Activated T-helper 1 cell treated with anti-CD3 and anti-CD28 coated beads, Interleukin-12 subunit alpha, Interleukin-12 subunit beta, Interleukin-2, Interleukin-4 antibody, amounts not matched to agents 30 ng/mL and 10 ng/mL and 1 ng/mL, durations not matched to agents 14 hours and 24 hours and 36 hours (primary cell): ENCODE measurements at regions of chr3 and their contacts with region 1.

Region 1: GRCh38 chr3:124995460-124995994 is 60.3 kb downstream of the HEG1 start:
- DNase-seq: peak; percentile 33
- H3K4me3 Mint-ChIP-seq: no peak overlapping the region
- H3K27ac Mint-ChIP-seq: no peak overlapping the region
- H3K4me1 Mint-ChIP-seq: peaks cover 20% of the 10 kb centered on the region
- H3K27me3 Mint-ChIP-seq: no peaks in the 10 kb centered on the region

Region 2: DNA sequence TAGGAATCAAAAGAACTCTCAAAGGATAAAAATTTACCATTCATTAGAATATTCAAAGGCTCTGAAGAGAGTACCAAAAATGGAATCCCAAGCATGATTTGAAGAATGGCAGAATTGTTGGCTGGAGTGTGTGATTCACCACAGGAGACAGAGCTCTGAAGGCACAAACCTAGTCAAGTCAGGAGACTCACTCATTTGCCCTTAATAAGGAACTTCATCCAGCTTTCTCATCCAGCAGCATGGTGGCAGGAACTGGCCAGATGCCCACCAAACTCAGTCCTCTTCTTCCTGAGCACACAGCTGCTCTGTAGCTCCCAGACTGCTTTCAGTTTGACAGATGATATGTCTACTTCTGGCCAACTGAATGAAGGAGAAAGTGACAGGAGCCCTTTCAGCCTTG is 76.8 kb after region 1 on chr3:
- intact Hi-C with region 1: no loop called
- DNase-seq: no peak
- H3K4me3 Mint-ChIP-seq: no peak overlapping the region
- H3K27ac Mint-ChIP-seq: no peak overlapping the region
- H3K4me1 Mint-ChIP-seq: peaks cover under 1% of the 10 kb centered on the region
- H3K27me3 Mint-ChIP-seq: peaks cover 22% of the 10 kb centered on the region

Region 3: DNA sequence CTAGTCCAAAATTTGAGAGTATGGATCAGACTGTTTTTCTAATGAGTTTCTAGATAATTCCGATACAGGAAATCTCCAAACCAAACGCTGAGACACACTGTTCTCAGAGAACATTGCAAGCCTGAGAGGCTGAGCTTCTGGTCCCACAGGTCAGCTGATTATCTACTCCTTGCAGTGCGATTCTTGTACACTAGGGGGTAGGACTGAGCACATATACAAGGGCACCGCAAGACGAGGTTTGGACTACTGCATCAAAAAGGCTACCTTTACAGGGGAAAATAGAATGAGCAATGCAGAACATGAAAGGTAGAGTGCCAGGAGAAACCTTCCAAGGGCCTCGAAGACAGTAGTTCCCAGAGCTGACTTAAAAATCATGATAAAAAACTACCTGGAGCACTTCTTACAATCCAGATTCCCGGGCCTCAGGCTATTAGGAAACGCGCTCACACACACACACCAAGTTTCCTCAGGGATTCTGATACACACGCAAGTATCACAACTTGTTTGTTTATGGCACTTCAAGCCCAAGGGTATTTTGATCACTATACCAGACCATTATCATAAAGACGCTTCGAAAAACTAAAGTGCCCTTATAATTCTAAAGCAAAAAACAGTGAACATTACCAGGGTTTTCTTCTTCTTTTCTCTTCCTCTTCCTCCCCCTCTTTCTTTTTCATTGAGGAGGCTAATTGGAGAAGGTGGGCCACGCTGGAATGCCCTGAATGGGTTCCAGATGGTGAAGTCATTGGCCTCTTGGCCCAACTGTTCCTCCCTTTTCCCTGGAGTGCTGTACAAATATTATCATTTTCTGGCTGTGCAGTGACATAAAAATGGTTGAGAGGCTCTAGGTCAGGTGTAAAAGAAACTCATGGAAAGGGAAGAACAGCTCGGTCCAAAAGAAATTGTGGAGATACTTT is 155.3 kb after region 1 on chr3:
- intact Hi-C with region 1: loop called (anchors 1 kb)
- DNase-seq: peak; percentile 48
- H3K4me3 Mint-ChIP-seq: no peak overlapping the region
- H3K27ac Mint-ChIP-seq: no peak overlapping the region
- H3K4me1 Mint-ChIP-seq: peaks cover 26% of the 10 kb centered on the region
- H3K27me3 Mint-ChIP-seq: peaks cover 40% of the 10 kb centered on the region

Region 4: GRCh38 chr3:125163739-125164601 is 168.4 kb after region 1 on chr3:
- intact Hi-C with region 1: loop called (anchors 1 kb)
- DNase-seq: no peak
- H3K4me3 Mint-ChIP-seq: no peak overlapping the region
- H3K27ac Mint-ChIP-seq: no peak overlapping the region
- H3K4me1 Mint-ChIP-seq: no peaks in the 10 kb centered on the region
- H3K27me3 Mint-ChIP-seq: peaks cover 26% of the 10 kb centered on the region

Region 5: GRCh38 chr3:125202197-125202596 is 206.7 kb after region 1 on chr3:
- intact Hi-C with region 1: loop called (anchors 1 kb)
- DNase-seq: no peak
- H3K4me3 Mint-ChIP-seq: no peak overlapping the region
- H3K27ac Mint-ChIP-seq: no peak overlapping the region
- H3K4me1 Mint-ChIP-seq: no peaks in the 10 kb centered on the region
- H3K27me3 Mint-ChIP-seq: peaks cover 28% of the 10 kb centered on the region

Region 6: GRCh38 chr3:125437631-125438435 is 442.3 kb after region 1 on chr3:
- intact Hi-C with region 1: loop called (anchors 1 kb)
- DNase-seq: peak; percentile 37
- H3K4me3 Mint-ChIP-seq: no peak overlapping the region
- H3K27ac Mint-ChIP-seq: no peak overlapping the region
- H3K4me1 Mint-ChIP-seq: no peaks in the 10 kb centered on the region
- H3K27me3 Mint-ChIP-seq: peaks cover 2% of the 10 kb centered on the region